Posterior vena cava (tissue), 2 donors: ENCODE measurements at regions of chr1 and their contacts with region 1.

Region 1: GRCh38 chr1:210280221-210280620 is 47.6 kb downstream of the SERTAD4 start:
- DNase-seq: no peak

Region 2: DNA sequence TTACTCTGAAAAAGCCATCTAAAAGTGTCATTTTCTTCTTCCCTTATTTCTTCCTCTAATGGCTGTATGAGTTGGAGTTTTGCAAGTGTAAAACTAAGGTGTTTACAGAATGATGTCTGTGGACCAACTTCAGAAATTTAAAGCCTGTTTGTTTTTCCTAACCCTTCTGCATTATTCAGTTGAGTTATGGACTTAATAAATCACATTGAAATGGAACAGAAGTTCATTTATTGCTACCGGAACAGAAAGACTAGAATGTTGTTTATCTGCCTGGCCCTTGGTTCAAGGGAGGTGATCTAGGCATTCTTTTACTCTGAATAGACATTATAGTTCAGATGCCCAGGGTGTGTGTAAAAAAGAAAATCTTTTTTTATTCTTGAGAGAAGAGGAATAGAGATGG is 317.4 kb before region 1 on chr1:
- intact Hi-C with region 1: no loop called
- DNase-seq: no peak

Region 3: GRCh38 chr1:210089846-210090245 is 190.4 kb before region 1 on chr1:
- intact Hi-C with region 1: no loop called
- DNase-seq: no peak

Region 4: GRCh38 chr1:210352575-210352974 is 72.4 kb after region 1 on chr1:
- intact Hi-C with region 1: no loop called
- DNase-seq: no peak

Region 5: DNA sequence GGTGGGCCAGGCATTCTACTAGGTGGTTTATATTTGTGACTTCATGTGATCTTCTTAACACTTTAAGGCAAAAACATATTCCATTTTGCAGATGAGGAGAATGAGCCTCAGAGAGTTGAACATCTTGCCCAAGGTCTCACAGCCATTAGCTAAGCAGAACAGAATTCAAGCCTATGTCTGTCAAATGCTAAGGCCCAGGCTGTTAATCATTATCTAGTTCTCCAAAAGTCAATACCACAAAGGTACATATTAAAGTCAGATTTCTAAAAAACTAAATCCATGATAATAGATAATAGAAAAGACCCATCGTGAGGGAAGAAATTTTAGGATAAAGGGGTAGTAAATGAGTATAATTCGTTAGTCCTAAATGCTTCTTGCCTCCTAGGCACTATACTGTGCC is 619.5 kb after region 1 on chr1:
- intact Hi-C with region 1: loop called in 1 of 2 experiments (anchors 5 kb)
- DNase-seq: no peak

Region 6: DNA sequence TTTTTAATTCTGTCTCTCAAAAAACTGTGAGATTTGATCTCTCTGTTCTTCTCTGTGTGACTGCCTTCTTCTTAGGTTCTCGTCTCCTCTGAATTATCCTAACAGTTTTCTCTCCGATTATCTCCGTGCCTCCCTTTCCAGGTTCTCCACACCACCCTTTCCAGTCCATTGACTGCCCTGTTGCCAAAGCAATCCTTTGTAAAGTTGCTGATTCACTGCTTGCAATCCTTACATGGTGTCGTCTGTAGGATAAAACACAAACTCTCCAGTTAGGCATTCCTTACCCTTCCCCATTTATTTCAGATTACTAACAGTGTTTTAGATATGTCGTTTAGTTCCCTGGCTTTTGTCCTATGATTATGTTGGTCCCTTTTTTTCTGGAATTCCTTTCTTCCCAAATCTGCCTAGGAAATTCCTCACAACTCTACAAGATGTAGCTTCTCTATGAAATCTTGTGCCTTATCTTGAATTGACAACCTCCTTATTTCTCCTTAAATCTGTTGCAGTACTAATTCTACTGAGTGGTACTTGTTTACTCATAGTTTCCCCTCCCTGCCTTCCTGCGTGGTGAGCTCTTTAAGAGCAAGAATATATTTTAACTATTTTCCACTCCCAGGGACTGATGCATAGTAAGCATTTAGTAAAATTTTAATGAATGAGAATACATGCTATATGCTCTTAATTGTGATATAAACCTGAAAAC is 1001.2 kb after region 1 on chr1:
- intact Hi-C with region 1: loop called in 1 of 2 experiments (anchors 5 kb)
- DNase-seq: no peak